ENCODE measurements at regions of chr18 and their contacts with region 1.

Region 1: DNA sequence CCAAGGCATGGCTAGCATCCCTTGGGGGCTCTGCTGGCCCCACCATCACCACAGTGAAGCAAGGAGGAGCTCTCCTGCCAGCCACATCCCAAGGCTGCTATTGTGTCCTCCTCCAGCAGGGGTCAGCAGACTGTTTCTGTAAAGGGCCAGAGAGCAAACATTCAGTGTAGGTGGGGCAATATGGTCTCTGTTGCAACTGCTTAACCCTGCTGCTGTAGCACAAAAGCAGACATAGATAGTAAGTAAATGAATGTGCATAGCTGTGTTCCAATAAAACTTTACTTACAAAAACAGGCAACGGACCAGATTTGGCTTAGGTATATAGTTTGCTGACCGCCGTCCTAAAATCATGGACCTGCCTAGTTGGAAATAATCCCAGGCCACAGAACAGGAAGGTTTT is 36.4 kb upstream of the ZBTB7C start:
- DNase-seq: peak; percentile 90
- H3K4me3 Mint-ChIP-seq: no peak overlapping the region
- H3K27ac Mint-ChIP-seq: no peak overlapping the region
- H3K4me1 Mint-ChIP-seq: peaks cover 6% of the 10 kb centered on the region
- H3K27me3 Mint-ChIP-seq: peaks cover 16% of the 10 kb centered on the region
- CTCF ChIP-seq: peak; percentile 94

Region 2: DNA sequence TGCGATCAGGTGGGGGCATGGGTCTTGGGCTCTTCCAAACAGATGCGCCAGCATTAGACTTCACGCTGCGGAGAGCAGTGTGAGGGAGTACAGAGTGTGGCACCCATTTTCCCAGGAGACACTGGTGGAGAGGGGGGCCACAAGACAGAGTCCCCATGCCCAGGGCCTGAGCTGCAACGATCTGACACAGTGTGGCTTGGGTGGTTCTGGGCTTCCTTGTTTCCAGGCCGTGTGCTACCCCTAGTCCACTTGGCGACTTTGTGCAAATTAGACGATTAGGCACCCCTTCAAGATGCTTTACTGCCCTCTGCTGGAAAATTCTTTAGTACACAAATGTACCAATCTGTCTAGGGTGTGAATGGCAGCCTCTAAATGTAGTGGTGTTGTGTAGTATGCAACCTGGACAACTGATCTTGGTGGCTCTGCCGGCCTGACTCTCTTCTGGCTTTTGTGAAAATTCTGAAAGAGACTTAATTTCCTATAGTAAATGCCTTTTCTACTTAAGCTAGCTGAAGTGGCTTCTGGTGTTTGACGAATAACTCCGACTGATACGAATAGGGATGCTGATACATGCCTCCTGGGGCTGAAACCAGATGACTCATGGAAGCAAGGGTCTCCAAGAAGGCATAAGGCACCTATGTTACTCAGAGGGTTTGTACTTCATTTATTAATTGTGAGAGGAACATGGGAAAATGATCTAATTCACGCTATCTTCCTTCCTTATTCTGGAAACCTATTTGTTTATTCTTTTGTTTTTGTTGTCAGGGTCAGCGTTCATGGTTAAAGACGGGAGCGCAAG is 422.8 kb before region 1 on chr18:
- CTCF ChIA-PET with region 1: interaction called, 264 read pairs
- POLR2A ChIA-PET with region 1: interaction called, 3 read pairs
- intact Hi-C with region 1: loop called (anchors 1 kb)
- DNase-seq: peak; percentile 83
- H3K4me3 Mint-ChIP-seq: no peak overlapping the region
- H3K27ac Mint-ChIP-seq: no peak overlapping the region
- H3K4me1 Mint-ChIP-seq: peaks cover 26% of the 10 kb centered on the region
- H3K27me3 Mint-ChIP-seq: no peaks in the 10 kb centered on the region
- CTCF ChIP-seq: peak; percentile 66

Region 3: DNA sequence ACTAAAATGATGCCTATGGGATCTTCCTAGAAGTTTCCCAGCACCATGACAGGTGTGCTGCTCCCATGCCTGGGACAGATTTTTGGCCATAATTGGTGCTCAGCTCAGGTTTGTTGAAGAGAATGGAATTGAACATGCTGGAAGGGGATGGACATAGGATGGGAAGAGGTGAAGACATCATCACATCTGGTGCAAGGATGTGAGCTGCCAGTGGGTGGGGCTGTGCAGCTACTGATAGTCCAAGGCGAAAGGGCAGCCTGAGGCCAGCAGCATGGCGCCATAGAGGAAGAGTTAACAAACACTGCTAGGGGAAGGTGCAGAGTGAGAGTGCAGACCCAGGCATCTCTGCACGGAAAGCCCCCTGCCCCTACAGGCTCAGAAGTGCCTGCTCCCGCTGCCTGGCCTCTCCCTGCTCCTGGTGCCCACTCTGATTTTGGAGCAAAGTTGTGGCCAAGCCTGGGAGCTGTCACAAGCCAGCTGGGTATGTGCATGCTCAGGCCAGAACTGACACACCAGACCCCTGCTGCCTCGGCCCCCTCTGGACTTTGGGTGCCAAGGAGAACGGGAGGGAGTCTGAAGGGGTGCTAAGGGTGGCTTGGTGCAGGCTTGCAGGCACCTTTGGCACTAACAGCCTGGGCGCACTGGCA is 214.9 kb before region 1 on chr18:
- CTCF ChIA-PET with region 1: interaction called, 43 read pairs
- POLR2A ChIA-PET with region 1: interaction called, 3 read pairs
- intact Hi-C with region 1: loop called (anchors 1 kb)
- DNase-seq: peak; percentile 78
- H3K4me3 Mint-ChIP-seq: no peak overlapping the region
- H3K27ac Mint-ChIP-seq: no peak overlapping the region
- H3K4me1 Mint-ChIP-seq: peaks cover 29% of the 10 kb centered on the region
- H3K27me3 Mint-ChIP-seq: peaks cover 8% of the 10 kb centered on the region
- CTCF ChIP-seq: peak; percentile 69

Region 4: GRCh38 chr18:48419277-48420022 is 26.1 kb before region 1 on chr18:
- CTCF ChIA-PET with region 1: interaction called, 10 read pairs
- POLR2A ChIA-PET with region 1: no interaction called
- intact Hi-C with region 1: no loop called
- DNase-seq: no peak
- H3K4me3 Mint-ChIP-seq: no peak overlapping the region
- H3K27ac Mint-ChIP-seq: no peak overlapping the region
- H3K4me1 Mint-ChIP-seq: peaks cover 6% of the 10 kb centered on the region
- H3K27me3 Mint-ChIP-seq: peaks cover 47% of the 10 kb centered on the region
- CTCF ChIP-seq: no peak

Region 5: GRCh38 chr18:48455555-48456478 is 10.3 kb after region 1 on chr18:
- CTCF ChIA-PET with region 1: interaction called, 137 read pairs
- POLR2A ChIA-PET with region 1: no interaction called
- intact Hi-C with region 1: no loop called
- DNase-seq: peak; percentile 49
- H3K4me3 Mint-ChIP-seq: no peak overlapping the region
- H3K27ac Mint-ChIP-seq: peak overlapping the region; percentile 50
- H3K4me1 Mint-ChIP-seq: peaks cover 23% of the 10 kb centered on the region
- H3K27me3 Mint-ChIP-seq: no peaks in the 10 kb centered on the region
- CTCF ChIP-seq: no peak

Measured in MCF 10A (cell line).